ENCODE measurements at regions of chr1 and their contacts with region 1.

Region 1: GRCh38 chr1:169348383-169349036 is 19.1 kb downstream of the NME7 start:
- DNase-seq: no peak
- ATAC-seq: no peak
- H3K4me3 Mint-ChIP-seq: no peak overlapping the region
- H3K27ac Mint-ChIP-seq: no peak overlapping the region
- H3K4me1 Mint-ChIP-seq: peaks cover 14% of the 10 kb centered on the region
- H3K27me3 Mint-ChIP-seq: no peaks in the 10 kb centered on the region

Region 2: GRCh38 chr1:168439456-168440375 is 908.8 kb before region 1 on chr1:
- CTCF ChIA-PET with region 1: interaction called, 5 read pairs
- POLR2A ChIA-PET with region 1: no interaction called
- intact Hi-C with region 1: loop called (anchors 1 kb)
- DNase-seq: peak; percentile 89
- ATAC-seq: peak; percentile 95
- H3K4me3 Mint-ChIP-seq: peak overlapping the region; percentile 42
- H3K27ac Mint-ChIP-seq: no peak overlapping the region
- H3K4me1 Mint-ChIP-seq: peaks cover 32% of the 10 kb centered on the region
- H3K27me3 Mint-ChIP-seq: no peaks in the 10 kb centered on the region

Region 3: GRCh38 chr1:168623003-168623828 is 725.3 kb before region 1 on chr1:
- CTCF ChIA-PET with region 1: interaction called, 4 read pairs
- POLR2A ChIA-PET with region 1: no interaction called
- intact Hi-C with region 1: loop called in 1 of 2 experiments (anchors 5 kb)
- DNase-seq: no peak
- ATAC-seq: no peak
- H3K4me3 Mint-ChIP-seq: no peak overlapping the region
- H3K27ac Mint-ChIP-seq: no peak overlapping the region
- H3K4me1 Mint-ChIP-seq: no peaks in the 10 kb centered on the region
- H3K27me3 Mint-ChIP-seq: peaks cover 6% of the 10 kb centered on the region

Region 4: DNA sequence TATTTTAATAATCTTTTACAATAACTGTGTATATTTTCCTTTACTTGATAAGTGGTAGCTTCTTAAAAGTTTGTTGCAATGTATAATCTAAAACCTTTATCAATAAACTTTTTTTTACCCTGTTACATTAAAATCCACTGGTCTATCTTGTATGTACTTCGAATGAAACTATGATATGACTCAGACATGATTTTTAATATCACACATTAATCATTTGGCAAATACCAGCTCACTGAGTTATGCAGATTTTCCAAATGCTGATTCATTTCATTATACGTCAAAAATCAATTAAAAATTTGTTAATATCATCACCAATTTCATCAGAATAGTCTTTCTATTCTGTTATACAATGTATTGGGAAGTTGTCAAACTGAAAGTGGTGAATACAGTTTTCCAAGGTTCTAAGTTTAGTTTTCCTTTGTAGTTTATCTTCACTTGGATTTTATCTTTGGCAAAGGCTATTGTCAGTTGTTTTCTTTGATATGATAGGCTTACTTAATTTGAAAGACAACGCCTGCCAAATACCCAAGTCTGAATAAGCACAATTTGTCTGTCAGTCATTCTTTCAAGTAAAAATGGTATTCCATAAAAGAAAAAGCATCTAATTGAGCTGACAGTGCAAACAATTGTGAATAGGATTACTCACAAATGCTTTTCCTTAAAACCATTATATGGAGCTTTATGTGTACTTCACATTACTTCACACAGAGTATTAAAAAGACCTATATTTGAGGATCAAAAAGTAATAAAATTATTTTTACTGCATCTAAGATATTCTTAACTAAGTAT is 107.9 kb before region 1 on chr1:
- CTCF ChIA-PET with region 1: no interaction called
- POLR2A ChIA-PET with region 1: no interaction called
- intact Hi-C with region 1: loop called in 1 of 2 experiments (anchors 5 kb)
- DNase-seq: no peak
- ATAC-seq: peak; percentile 69
- H3K4me3 Mint-ChIP-seq: no peak overlapping the region
- H3K27ac Mint-ChIP-seq: no peak overlapping the region
- H3K4me1 Mint-ChIP-seq: peaks cover 19% of the 10 kb centered on the region
- H3K27me3 Mint-ChIP-seq: no peaks in the 10 kb centered on the region

Region 5: DNA sequence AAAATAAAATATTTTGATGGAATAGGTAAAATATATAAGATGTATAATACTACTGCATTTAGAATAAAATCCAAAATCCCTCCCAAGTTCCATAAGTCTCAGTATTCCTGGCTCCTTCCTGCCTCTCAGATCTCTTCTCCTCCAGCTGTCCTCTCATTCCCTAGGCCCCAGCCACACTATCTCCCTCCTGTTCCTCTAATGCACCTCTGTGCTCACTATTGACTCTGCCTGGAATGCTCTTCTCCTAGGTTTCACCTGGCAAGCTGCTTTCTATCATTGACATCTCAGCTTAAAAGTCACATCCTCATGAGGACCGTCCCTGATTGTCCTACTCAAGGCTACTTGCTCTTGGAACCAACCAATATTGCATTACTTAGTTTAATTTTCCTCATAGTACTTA is 11.9 kb after region 1 on chr1:
- CTCF ChIA-PET with region 1: interaction called, 13 read pairs
- POLR2A ChIA-PET with region 1: no interaction called
- intact Hi-C with region 1: no loop called
- DNase-seq: no peak
- ATAC-seq: no peak
- H3K4me3 Mint-ChIP-seq: no peak overlapping the region
- H3K27ac Mint-ChIP-seq: no peak overlapping the region
- H3K4me1 Mint-ChIP-seq: peaks cover 19% of the 10 kb centered on the region
- H3K27me3 Mint-ChIP-seq: no peaks in the 10 kb centered on the region